ENCODE measurements at regions of chr7 and their contacts with region 1.

Region 1: DNA sequence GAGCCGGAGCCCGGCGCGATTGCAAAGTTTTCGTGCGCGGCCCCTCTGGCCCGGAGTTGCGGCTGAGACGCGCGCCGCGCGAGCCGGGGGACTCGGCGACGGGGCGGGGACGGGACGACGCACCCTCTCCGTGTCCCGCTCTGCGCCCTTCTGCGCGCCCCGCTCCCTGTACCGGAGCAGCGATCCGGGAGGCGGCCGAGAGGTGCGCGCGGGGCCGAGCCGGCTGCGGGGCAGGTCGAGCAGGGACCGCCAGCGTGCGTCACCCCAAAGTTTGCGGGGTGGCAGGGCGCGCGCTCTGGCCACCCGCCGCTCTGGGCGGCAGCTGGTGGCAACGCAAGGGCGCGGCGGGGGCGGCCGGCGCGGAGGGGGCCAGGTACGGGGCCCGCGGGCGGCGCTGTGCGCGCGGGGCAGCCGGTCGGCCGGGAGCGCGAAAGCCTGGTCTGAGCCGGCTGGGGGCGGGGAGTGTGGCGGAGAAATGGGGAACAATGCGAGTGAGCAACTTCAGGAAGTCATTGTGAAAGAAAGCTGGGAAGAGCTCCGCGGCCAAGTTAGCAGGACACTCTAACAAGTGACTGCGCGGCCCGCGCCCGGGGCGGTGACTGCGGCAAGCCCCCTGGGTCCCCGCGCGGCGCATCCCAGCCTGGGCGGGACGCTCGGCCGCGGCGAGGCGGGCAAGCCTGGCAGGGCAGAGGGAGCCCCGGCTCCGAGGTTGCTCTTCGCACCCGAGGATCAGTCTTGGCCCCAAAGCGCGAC is at the start of gene IKZF1:
- DNase-seq: peak; percentile 66
- ATAC-seq: peak; percentile 25
- H3K4me3 Mint-ChIP-seq: peak within 1 kb of the TSS; percentile 94
- H3K27ac Mint-ChIP-seq: peak within 1 kb of the TSS; percentile 97
- H3K4me1 Mint-ChIP-seq: peaks cover 33% of the 10 kb centered on the region
- H3K27me3 Mint-ChIP-seq: no peaks in the 10 kb centered on the region
- CTCF ChIP-seq: no peak
- total RNA-seq, gene IKZF1: 277 to 295 TPM

Region 2: DNA sequence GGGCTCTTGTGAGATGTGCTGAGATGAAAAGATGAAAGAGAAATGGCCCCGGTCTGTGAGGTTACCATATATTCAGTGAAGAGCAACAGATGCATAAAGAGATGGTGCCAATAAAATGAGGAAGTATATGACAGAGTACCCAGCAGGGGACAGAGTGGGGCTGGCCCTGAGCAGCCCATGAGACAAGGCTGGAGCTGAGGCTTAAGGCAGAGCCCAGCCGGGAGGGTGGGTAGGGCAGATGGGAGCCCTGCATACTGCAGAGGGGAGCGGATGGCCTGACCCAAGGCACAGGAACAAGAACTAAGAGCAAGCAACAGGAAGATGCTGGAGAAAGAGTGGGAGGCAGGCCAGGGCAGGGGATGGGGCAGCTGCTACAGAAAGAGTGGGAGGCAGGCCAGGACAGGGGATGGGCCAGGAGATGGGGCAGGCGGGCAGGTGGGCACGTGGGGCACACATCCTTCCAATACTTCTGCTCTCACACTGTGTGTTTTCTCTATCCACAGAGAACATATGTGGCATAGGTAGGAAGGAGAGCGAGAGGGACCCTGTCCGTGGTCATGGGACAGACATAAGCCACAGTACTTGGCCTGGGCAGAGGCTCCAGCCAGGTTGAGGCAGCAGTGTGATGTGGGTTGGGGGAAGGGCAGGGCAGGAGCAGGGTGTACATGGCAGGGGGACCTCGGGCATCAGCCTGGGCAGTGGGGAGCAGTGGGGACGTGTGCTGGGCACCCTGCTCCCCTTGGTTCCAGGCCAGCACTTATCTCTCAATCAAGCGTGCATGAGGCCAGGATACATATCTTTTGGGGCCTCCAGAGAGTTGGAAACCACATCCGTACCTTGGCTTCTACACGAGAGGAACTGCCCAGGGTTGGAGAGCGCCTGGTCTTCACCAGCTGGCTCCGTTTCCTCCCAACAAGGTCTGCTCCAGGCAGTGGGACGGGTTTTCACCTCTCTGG is 91.4 kb before region 1 on chr7:
- CTCF ChIA-PET with region 1: interaction called, 209 read pairs
- POLR2A ChIA-PET with region 1: interaction called, 376 read pairs
- intact Hi-C with region 1: no loop called
- DNase-seq: peak; percentile 55
- ATAC-seq: peak; percentile 31
- H3K4me3 Mint-ChIP-seq: peak overlapping the region; percentile 0
- H3K27ac Mint-ChIP-seq: peak overlapping the region; percentile 63
- H3K4me1 Mint-ChIP-seq: peaks cover 87% of the 10 kb centered on the region
- H3K27me3 Mint-ChIP-seq: no peaks in the 10 kb centered on the region
- CTCF ChIP-seq: no peak

Region 3: GRCh38 chr7:50266635-50267386 is 37.5 kb before region 1 on chr7:
- CTCF ChIA-PET with region 1: interaction called, 15 read pairs
- POLR2A ChIA-PET with region 1: interaction called, 133 read pairs
- intact Hi-C with region 1: loop called (anchors 1 kb)
- DNase-seq: peak; percentile 92
- ATAC-seq: peak; percentile 62
- H3K4me3 Mint-ChIP-seq: peak overlapping the region; percentile 63
- H3K27ac Mint-ChIP-seq: peak overlapping the region; percentile 92
- H3K4me1 Mint-ChIP-seq: peaks cover 93% of the 10 kb centered on the region
- H3K27me3 Mint-ChIP-seq: no peaks in the 10 kb centered on the region
- CTCF ChIP-seq: no peak

Region 4: DNA sequence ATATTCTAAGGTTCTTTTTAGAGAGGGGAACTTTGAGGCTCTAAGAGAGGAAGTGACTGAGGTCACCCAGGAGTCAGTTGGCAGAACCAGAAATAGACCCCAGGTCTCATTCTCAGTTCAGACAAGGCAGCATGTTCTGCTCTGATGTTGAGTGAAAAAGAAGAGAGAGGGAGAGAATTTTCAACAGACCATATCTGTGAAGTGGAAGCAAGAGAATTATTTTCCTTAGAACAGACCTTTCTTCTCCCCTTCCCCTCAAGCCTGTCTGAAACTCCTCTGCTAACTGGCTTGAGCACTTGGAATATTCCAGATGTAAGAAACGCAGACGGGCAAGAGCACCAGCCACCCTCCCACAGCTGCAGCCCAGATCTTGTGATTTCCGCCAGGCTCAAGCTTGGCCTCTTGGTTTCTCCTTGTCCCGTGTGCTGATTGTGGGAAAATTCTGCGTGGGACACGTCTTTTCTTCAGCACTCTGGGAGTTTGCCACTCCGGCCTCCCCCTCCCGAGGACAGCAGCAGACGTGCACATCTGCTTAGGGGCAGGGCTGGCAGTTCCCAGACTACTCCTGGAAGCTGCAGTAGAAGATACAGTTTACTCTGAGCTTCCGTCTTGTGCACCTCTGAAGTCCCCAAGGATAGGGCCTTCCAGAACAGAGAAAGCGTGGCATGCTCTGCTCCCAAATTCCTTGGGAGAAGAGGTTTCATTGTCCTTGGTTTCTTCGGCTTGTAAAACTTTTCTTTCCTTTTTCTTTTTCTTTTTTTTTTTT is 22.5 kb before region 1 on chr7:
- CTCF ChIA-PET with region 1: interaction called, 3 read pairs
- POLR2A ChIA-PET with region 1: interaction called, 16 read pairs
- intact Hi-C with region 1: no loop called
- DNase-seq: peak; percentile 45
- ATAC-seq: peak; percentile 78
- H3K4me3 Mint-ChIP-seq: peak overlapping the region; percentile 63
- H3K27ac Mint-ChIP-seq: peak overlapping the region; percentile 89
- H3K4me1 Mint-ChIP-seq: peaks cover 63% of the 10 kb centered on the region
- H3K27me3 Mint-ChIP-seq: no peaks in the 10 kb centered on the region
- CTCF ChIP-seq: no peak

Region 5: DNA sequence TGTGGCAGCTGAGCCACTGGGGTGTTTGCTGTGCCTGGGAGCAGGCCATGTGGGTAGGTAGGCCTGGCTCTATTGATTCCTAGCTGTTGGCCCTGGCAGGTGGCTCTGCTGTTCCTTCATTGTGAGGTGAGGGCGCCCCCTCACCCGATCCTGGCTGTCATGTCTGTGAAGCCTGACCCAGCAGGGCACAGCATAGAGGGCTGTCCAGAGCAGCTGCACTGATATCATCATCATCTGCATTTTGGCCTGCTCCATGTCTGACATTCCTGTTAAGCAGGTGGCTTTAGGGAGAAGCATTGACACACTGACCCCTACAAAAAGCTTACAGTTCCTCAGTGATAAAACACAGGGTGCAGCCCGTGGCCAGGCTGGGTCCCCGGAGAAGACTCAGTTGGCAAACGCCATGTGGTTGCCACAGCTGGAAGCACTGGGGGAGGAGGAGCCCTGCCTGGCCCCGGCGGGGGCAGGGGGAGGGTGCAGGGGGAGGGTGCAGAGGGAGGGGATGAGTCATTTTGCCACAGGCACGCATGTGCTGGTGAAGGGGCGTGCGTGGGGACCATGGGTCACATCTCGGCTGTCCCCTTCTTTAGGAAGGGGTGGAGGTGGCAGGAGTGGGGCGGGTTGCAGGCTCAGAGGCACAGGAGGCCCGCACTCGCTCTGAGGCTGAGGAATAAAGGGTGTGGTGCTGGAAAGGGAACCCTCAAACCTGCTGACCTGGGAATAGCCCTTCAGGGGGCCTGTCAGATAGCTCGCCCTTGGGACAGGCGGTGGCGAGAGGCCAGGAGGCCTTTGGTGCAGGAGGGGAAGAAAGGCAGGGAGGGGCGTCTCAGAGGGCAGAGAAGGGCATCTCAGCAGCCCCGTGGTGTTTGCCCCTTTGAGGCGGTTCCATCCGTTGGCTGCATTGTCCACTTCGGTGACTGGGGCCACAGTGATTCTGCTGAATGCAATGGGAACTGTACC is 31.7 kb after region 1 on chr7:
- CTCF ChIA-PET with region 1: interaction called, 32 read pairs
- POLR2A ChIA-PET with region 1: interaction called, 1,646 read pairs
- intact Hi-C with region 1: no loop called
- DNase-seq: peak; percentile 93
- ATAC-seq: peak; percentile 53
- H3K4me3 Mint-ChIP-seq: no peak overlapping the region
- H3K27ac Mint-ChIP-seq: no peak overlapping the region
- H3K4me1 Mint-ChIP-seq: peaks cover 21% of the 10 kb centered on the region
- H3K27me3 Mint-ChIP-seq: no peaks in the 10 kb centered on the region
- CTCF ChIP-seq: no peak

Region 6: DNA sequence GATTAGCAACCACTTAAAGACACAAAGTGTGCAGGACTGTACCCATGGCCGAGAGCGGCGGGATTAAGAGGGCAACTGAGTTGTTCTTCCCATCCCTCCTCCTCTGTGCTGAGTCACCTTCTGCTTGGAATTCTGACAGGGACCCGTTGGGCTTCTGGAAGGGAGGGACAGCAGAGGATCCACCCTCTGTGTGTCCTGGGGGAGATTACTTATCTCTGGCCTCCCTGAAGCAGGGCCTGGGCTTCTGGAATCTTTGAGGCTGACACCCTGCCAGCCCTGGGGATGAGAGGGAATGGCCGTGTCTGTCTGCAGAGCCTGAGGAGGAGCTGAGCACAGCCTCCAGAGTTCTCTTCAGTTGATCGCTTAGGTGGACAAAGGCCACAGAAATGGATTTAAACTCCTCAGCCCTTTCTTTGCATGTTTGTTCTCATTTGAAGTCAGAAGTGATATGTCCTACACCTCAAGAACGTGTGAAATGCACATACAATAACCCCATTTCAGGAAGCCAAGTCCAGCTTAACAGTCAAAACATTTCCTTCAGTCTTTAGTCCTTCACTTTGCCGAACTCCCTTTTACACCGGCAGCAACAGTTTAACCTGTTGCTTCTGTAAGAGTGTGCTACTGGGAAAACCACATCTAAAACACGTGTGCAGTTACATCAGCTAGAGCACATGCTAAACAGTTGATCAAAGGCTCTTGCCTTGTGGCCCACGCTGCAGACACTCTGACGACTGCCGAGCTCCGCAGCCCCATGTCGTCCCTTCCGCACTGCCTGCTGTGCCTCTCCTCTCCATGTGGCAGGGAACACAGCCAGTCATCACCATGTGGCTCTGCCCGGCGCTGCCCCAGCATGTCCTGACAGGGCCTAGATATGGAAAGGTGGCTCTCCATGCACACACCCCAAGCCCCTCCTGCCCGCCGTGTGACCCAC is 55.9 kb after region 1 on chr7:
- CTCF ChIA-PET with region 1: interaction called, 16 read pairs
- POLR2A ChIA-PET with region 1: interaction called, 1,646 read pairs
- intact Hi-C with region 1: no loop called
- DNase-seq: peak; percentile 90
- ATAC-seq: peak; percentile 75
- H3K4me3 Mint-ChIP-seq: peak overlapping the region; percentile 69
- H3K27ac Mint-ChIP-seq: peak overlapping the region; percentile 99
- H3K4me1 Mint-ChIP-seq: peaks cover 93% of the 10 kb centered on the region
- H3K27me3 Mint-ChIP-seq: no peaks in the 10 kb centered on the region
- CTCF ChIP-seq: no peak

Region 7: DNA sequence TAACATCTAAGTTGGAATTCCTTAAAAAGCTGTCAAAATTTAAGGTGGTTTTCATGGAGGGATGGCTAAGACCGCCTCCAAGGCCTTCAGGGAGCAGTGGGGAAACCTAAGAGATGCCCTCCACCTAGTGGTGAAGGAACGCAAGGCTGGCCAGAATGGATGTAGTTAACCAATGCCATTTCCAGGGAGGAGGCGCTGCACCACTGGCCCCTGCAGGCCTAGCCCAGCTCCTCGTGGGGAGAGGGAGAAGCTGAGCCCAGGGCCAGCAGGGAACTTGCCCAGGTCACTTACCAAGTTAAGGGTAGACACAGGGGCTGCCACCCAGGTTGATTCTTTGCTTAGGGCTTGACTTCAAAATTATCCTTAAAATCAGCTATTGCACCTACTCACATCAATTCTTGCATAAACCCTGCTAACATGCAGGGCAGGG is 113.8 kb after region 1 on chr7:
- CTCF ChIA-PET with region 1: interaction called, 13 read pairs
- POLR2A ChIA-PET with region 1: interaction called, 3 read pairs
- intact Hi-C with region 1: no loop called
- DNase-seq: peak; percentile 90
- ATAC-seq: peak; percentile 93
- H3K4me3 Mint-ChIP-seq: no peak overlapping the region
- H3K27ac Mint-ChIP-seq: no peak overlapping the region
- H3K4me1 Mint-ChIP-seq: peaks cover 26% of the 10 kb centered on the region
- H3K27me3 Mint-ChIP-seq: no peaks in the 10 kb centered on the region
- CTCF ChIP-seq: peak; percentile 90

Measured in activated CD8-positive, alpha-beta T cell treated with anti-CD3 and anti-CD28 coated beads for 36 hours (primary cell).